ENCODE measurements at regions of chr14 and their contacts with region 1.

Region 1: DNA sequence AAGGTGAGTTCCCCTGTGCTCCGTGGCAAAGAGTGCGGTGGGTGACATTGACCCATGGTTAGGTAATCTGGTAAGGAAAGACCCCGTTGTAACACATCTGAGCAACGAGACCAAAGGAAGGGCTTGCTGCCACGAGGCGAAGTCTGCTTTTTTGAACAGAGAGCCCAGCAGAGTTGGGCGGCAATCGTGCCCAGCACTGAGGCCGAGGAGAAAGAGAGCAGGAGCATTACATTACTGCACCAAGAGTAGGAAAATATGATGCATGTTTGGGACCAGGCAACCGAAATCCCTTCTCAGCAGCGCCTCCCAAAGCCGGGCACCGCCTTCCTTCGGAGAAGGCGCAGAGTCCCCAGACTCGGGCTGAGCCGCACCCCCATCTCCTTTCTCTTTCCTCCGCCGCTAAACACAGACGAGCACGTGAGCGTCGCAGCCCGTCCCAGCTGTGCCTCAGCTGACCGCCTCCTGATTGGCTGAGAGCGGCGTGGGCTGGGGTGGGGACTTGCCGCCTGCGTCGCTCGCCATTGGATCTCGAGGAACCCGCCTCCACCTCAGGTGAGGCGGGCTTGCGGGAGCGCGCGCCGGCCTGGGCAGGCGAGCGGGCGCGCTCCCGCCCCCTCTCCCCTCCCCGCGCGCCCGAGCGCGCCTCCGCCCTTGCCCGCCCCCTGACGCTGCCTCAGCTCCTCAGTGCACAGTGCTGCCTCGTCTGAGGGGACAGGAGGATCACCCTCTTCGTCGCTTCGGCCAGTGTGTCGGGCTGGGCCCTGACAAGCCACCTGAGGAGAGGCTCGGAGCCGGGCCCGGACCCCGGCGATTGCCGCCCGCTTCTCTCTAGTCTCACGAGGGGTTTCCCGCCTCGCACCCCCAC is at the start of gene HIF1A:
- DNase-seq: peak; percentile 87 to 100 (median 95)
- ATAC-seq: peak; percentile 95
- H3K4me3 ChIP-seq: peak within 1 kb of the TSS; percentile 90
- H3K4me3 Mint-ChIP-seq: peak within 1 kb of the TSS; percentile 98
- H3K27ac ChIP-seq: peak within 1 kb of the TSS; percentile 89 to 91
- H3K27ac Mint-ChIP-seq: peak within 1 kb of the TSS; percentile 97
- H3K4me1 ChIP-seq: peaks cover 17% of the 10 kb centered on the region
- H3K4me1 Mint-ChIP-seq: peaks cover 72% of the 10 kb centered on the region
- H3K27me3 ChIP-seq: no peaks in the 10 kb centered on the region
- H3K27me3 Mint-ChIP-seq: no peaks in the 10 kb centered on the region
- CTCF ChIP-seq: no peak
- total RNA-seq, gene HIF1A: 350 to 369 TPM

Region 2: DNA sequence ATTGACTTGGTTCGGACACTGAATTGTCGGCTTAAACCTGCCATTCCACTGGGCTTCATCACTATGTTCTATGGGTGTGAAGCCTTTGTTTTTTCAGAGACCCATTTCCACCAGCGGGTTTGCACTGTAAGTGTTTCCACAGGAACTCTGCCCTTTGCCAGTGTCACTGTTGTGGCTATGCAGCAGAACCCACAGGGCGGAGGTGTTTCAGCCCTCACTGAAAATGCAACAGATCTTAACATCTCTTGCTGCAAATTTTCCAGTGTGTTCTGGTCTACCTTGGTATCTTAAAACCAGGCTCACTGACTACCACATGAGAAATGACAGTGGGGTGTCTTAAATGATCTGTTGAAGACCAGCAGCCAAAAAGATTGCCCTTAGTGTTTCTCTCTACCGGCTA is 352.6 kb before region 1 on chr14:
- CTCF ChIA-PET with region 1: no interaction called
- POLR2A ChIA-PET with region 1: interaction called, 3 read pairs
- intact Hi-C with region 1: loop called in 1 of 2 experiments (anchors 5 kb)
- DNase-seq: peak; percentile 60 to 93 (median 76)
- ATAC-seq: peak; percentile 57
- H3K4me3 ChIP-seq: peak overlapping the region; percentile 23
- H3K4me3 Mint-ChIP-seq: peak overlapping the region; percentile 87
- H3K27ac ChIP-seq: peak overlapping the region; percentile 79 to 88
- H3K27ac Mint-ChIP-seq: peak overlapping the region; percentile 99
- H3K4me1 ChIP-seq: peaks cover 90% of the 10 kb centered on the region
- H3K4me1 Mint-ChIP-seq: peaks cover 92% of the 10 kb centered on the region
- H3K27me3 ChIP-seq: no peaks in the 10 kb centered on the region
- H3K27me3 Mint-ChIP-seq: no peaks in the 10 kb centered on the region
- CTCF ChIP-seq: no peak

Region 3: DNA sequence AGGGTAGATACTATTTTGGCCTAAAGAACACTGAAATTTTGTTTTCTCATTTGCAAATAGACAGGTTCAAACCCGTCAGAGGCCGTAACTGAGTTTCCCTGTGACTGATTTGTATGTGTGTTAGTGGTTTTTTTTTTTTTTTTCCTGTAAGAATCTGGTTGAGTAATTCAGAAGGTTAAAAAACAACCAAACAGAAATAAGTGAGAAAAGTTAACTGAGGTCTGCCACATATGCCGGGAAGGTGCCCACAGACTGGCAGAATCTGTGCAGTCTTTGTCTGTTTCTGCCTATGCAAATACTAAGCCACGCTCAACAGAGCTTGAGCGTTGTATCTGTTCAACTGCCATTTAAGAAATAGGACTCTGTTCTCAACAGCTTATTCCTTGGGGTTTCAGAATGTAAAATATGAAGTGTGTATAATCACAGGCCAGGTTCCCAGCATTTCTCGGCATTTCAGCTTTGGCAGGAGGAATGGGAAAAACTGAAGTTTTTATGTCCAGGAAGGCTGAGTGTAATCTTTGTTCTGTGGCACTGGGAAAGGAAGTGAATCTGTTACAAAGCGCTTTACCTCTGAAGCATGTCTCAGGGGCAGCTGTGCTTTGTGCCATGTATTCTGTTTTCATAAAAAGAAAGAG is 191.8 kb before region 1 on chr14:
- CTCF ChIA-PET with region 1: no interaction called
- POLR2A ChIA-PET with region 1: interaction called, 11 read pairs
- intact Hi-C with region 1: no loop called
- DNase-seq: peak; percentile 37 to 82 (median 58)
- ATAC-seq: peak; percentile 86
- H3K4me3 ChIP-seq: no peak overlapping the region
- H3K4me3 Mint-ChIP-seq: peak overlapping the region; percentile 77
- H3K27ac ChIP-seq: peak overlapping the region; percentile 64 to 69
- H3K27ac Mint-ChIP-seq: no peak overlapping the region
- H3K4me1 ChIP-seq: peaks cover 73% of the 10 kb centered on the region
- H3K4me1 Mint-ChIP-seq: peaks cover 96% of the 10 kb centered on the region
- H3K27me3 ChIP-seq: no peaks in the 10 kb centered on the region
- H3K27me3 Mint-ChIP-seq: no peaks in the 10 kb centered on the region
- CTCF ChIP-seq: no peak

Region 4: DNA sequence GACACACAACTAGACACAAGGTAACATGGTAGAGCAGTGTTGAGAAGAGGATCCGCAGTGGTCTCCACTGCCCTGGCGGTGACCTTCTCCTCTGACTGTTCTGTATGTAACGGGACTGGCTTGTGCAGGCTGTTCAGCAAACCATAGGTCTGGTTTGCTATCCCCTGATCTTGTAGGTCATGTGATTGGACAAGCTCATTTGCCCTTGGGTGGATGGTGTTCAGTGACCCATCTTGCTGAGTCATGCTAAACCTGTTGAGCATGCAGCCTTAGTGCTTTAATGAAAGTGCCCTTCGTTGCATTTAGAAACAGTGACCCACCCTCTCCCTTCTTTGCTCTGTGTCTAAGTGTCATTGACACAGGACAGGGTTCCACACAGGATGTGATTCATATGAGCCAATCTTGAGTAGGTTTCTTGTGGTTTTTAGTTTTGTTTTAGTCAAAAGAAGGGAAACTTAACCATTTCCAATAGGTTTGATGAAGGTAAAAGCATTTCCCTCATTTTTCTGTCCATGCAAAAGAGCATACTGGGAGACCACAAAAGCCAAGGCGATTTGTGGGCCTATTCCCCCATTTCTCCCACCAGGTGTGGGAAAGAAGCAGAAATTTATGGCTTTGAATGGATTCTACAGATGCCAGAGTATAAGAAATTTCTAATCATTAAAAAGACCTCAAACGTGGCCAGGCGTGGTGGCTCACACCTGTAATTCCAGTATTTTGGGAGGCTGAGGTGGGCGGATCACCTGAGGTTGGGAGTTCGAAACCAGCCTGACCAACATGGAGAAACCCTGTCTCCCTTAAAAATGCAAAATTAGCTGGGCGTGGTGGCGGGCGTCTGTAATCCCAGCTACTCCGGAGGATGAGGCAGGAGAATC is 32.4 kb before region 1 on chr14:
- CTCF ChIA-PET with region 1: interaction called, 3 read pairs
- POLR2A ChIA-PET with region 1: interaction called, 10 read pairs
- intact Hi-C with region 1: loop called in 1 of 2 experiments (anchors 5 kb)
- DNase-seq: peak in 13 of 14 experiments; percentile 13 to 92 (median 22)
- ATAC-seq: peak; percentile 75
- H3K4me3 ChIP-seq: peak overlapping the region; percentile 33
- H3K4me3 Mint-ChIP-seq: peak overlapping the region; percentile 70
- H3K27ac ChIP-seq: peak overlapping the region; percentile 54 to 70
- H3K27ac Mint-ChIP-seq: peak overlapping the region; percentile 86
- H3K4me1 ChIP-seq: peaks cover 49% of the 10 kb centered on the region
- H3K4me1 Mint-ChIP-seq: peaks cover 69% of the 10 kb centered on the region
- H3K27me3 ChIP-seq: no peaks in the 10 kb centered on the region
- H3K27me3 Mint-ChIP-seq: no peaks in the 10 kb centered on the region
- CTCF ChIP-seq: no peak

Region 5: GRCh38 chr14:61713724-61714414 is 18.8 kb after region 1 on chr14:
- CTCF ChIA-PET with region 1: no interaction called
- POLR2A ChIA-PET with region 1: interaction called, 24 read pairs
- intact Hi-C with region 1: loop called in 1 of 2 experiments (anchors 2 kb)
- DNase-seq: no peak
- ATAC-seq: no peak
- H3K4me3 ChIP-seq: no peak overlapping the region
- H3K4me3 Mint-ChIP-seq: peak overlapping the region; percentile 40
- H3K27ac ChIP-seq: no peak overlapping the region
- H3K27ac Mint-ChIP-seq: peak overlapping the region; percentile 23
- H3K4me1 ChIP-seq: peaks cover 40% of the 10 kb centered on the region
- H3K4me1 Mint-ChIP-seq: peaks cover 96% of the 10 kb centered on the region
- H3K27me3 ChIP-seq: no peaks in the 10 kb centered on the region
- H3K27me3 Mint-ChIP-seq: no peaks in the 10 kb centered on the region
- CTCF ChIP-seq: no peak

Region 6: DNA sequence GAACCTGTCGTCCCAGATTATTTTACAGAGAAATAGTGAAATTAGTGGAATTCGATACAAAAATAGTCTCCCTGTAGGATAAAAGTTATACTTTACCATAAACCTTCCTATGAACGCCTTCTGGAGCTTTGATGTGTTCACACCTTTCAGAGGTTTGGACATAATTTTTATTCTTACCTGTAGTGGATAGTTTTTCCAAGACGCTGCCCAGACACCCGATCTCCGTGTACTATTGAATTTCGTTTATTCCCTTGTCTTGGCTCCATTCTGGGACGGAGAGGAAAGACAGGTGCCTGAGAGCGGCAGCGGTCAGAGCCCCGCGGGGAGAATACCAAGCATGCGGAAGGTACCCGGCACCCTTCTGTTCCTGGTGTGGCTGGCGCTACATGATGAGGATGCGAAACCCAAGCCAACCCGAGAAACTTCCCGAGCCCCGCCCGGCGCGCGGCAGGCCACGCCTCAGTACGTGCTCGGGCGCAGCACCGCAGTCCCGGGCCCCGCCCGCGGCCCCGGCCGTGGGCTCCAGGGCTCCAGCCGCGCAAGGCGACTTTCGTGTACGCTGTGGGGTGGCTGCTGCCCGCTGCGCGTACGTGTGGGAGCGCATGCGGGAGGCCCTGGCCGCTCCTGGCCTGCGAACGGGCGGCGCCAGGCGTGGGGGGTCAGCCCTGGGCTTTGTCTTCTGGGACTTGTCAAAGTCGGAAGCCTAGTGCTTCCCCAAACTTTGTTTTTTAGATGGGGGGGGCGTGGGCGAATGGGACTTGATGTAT is 55.8 kb after region 1 on chr14:
- CTCF ChIA-PET with region 1: no interaction called
- POLR2A ChIA-PET with region 1: interaction called, 3 read pairs
- intact Hi-C with region 1: loop called in 1 of 2 experiments (anchors 5 kb)
- DNase-seq: peak; percentile 40 to 91 (median 68)
- ATAC-seq: peak; percentile 94
- H3K4me3 ChIP-seq: peak overlapping the region; percentile 56
- H3K4me3 Mint-ChIP-seq: peak overlapping the region; percentile 83
- H3K27ac ChIP-seq: peak overlapping the region in 1 of 2 donors; percentile 32
- H3K27ac Mint-ChIP-seq: peak overlapping the region; percentile 58
- H3K4me1 ChIP-seq: peaks cover 7% of the 10 kb centered on the region
- H3K4me1 Mint-ChIP-seq: peaks cover 4% of the 10 kb centered on the region
- H3K27me3 ChIP-seq: no peaks in the 10 kb centered on the region
- H3K27me3 Mint-ChIP-seq: no peaks in the 10 kb centered on the region
- CTCF ChIP-seq: no peak

Measured in CD4-positive, alpha-beta T cell (primary cell).